Activated CD4-positive, alpha-beta T cell treated with anti-CD3 and anti-CD28 coated beads for 36 hours (primary cell): ENCODE measurements at regions of chr18 and their contacts with region 1.

Region 1: GRCh38 chr18:44036501-44036900 is 644.2 kb upstream of the SETBP1 start:
- DNase-seq: no peak
- ATAC-seq: no peak
- H3K4me3 Mint-ChIP-seq: no peak overlapping the region
- H3K27ac Mint-ChIP-seq: no peak overlapping the region
- H3K4me1 Mint-ChIP-seq: no peaks in the 10 kb centered on the region
- H3K27me3 Mint-ChIP-seq: no peaks in the 10 kb centered on the region

Region 2: GRCh38 chr18:43934781-43935471 is 101.6 kb before region 1 on chr18:
- CTCF ChIA-PET with region 1: no interaction called
- POLR2A ChIA-PET with region 1: no interaction called
- intact Hi-C with region 1: no loop called
- DNase-seq: no peak
- ATAC-seq: no peak
- H3K4me3 Mint-ChIP-seq: no peak overlapping the region
- H3K27ac Mint-ChIP-seq: no peak overlapping the region
- H3K4me1 Mint-ChIP-seq: no peaks in the 10 kb centered on the region
- H3K27me3 Mint-ChIP-seq: no peaks in the 10 kb centered on the region

Region 3: GRCh38 chr18:43970656-43971055 is 65.8 kb before region 1 on chr18:
- CTCF ChIA-PET with region 1: no interaction called
- POLR2A ChIA-PET with region 1: no interaction called
- intact Hi-C with region 1: loop called in 1 of 2 experiments (anchors 10 kb)
- DNase-seq: no peak
- ATAC-seq: no peak
- H3K4me3 Mint-ChIP-seq: no peak overlapping the region
- H3K27ac Mint-ChIP-seq: no peak overlapping the region
- H3K4me1 Mint-ChIP-seq: no peaks in the 10 kb centered on the region
- H3K27me3 Mint-ChIP-seq: no peaks in the 10 kb centered on the region